Activated B cell treated with CpG ODN at 0.5 μM for 24 hours (primary cell): ENCODE measurements at regions of chr21 and their contacts with region 1.

Region 1: DNA sequence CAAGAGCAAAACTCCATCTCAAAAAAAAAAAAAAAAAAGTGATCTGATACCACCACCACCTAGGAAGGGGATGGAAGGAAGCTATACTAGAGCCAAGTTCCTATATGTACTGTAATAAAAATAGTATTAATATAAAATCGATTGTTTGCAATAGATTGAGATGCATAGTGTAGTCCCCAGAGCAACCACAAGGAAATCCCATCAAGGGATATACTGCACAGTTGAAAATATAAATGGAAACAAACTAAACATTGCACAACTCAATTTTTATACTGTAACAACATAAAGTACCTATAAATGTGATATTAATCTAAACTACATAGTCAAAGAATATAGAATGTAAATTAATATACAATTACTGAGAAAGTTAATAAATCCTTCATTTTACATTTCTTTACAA is 20.9 kb upstream of the PSMG1 start:
- DNase-seq: no peak
- ATAC-seq: no peak
- H3K4me3 Mint-ChIP-seq: no peak overlapping the region
- H3K27ac Mint-ChIP-seq: no peak overlapping the region
- H3K4me1 Mint-ChIP-seq: peaks cover 2% of the 10 kb centered on the region
- H3K27me3 Mint-ChIP-seq: no peaks in the 10 kb centered on the region
- CTCF ChIP-seq: no peak

Region 2: DNA sequence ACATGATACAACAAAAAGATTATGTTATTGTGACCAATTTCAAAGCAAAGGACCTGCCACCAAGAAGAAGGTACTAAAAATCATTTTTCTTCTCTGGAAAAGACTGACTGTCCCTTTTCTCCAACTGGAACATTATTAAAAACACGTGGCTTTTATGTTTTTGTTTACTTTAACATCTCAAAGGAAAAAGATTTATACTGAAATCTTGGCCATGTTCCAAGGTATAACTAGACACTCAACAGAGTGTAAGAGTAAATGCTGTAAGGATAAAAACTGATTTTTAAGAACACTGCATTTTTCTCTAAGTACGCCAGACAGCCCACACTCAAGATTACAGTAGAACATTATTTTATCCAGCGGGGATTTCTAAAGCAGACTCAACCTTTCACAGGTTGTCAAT is 47.2 kb after region 1 on chr21:
- CTCF ChIA-PET with region 1: no interaction called
- POLR2A ChIA-PET with region 1: no interaction called
- intact Hi-C with region 1: loop called (anchors 10 kb)
- DNase-seq: no peak
- ATAC-seq: no peak
- H3K4me3 Mint-ChIP-seq: no peak overlapping the region
- H3K27ac Mint-ChIP-seq: no peak overlapping the region
- H3K4me1 Mint-ChIP-seq: no peaks in the 10 kb centered on the region
- H3K27me3 Mint-ChIP-seq: no peaks in the 10 kb centered on the region
- CTCF ChIP-seq: no peak